Left ventricle myocardium superior (tissue), 1 donor: ENCODE measurements at regions of chr9 and their contacts with region 1.

Region 1: DNA sequence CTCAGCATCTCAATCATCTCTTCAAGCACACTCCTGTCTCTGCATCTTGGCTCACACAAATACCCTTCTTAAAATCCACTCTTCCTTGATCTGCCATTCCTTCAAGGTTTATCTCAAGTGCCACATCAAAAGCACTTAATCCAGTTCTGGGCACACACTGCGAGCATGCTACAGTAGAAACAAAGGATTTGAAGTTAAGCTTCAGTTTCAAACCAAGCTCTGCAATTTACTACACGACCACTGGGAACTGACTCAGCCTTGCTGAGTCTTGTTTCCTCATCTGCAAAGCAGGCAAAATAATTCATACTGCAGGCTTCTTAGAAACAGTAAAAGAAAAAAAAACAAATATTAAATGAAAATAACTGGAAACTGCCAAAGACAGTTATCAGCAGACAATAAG is 50.5 kb upstream of the CTNNAL1 start:
- DNase-seq: no peak
- ATAC-seq: no peak

Region 2: DNA sequence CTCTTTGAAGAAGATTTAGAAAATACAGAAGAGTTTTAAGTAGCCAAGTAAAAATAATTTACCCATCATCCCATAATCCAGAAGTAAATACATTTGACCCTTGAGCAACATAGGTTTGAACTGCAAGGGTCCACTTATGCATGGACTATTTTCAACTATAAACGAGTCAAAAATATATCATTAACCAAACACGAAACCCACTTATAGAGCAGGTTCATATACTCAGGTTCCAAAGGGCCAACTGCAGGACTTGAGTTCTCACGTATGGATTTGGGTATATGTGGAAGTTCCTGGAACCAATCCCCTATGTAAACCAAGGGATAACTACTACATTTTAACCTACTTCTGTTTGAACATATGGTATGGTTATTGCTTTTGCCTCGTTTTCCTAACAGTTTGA is 123.8 kb before region 1 on chr9:
- intact Hi-C with region 1: loop called (anchors 10 kb)
- DNase-seq: no peak
- ATAC-seq: no peak

Region 3: GRCh38 chr9:109297899-109298298 is 234.1 kb after region 1 on chr9:
- intact Hi-C with region 1: no loop called
- DNase-seq: no peak
- ATAC-seq: no peak